GM23248 (cell line): ENCODE measurements at regions of chr16 and their contacts with region 1.

Region 1: GRCh38 chr16:28943281-28943680 is 7.5 kb upstream of the NFATC2IP start:
- DNase-seq: no peak
- H3K4me3 ChIP-seq: no peak overlapping the region
- H3K27ac ChIP-seq: no peak overlapping the region
- H3K4me1 ChIP-seq: no peaks in the 10 kb centered on the region
- H3K27me3 ChIP-seq: no peaks in the 10 kb centered on the region

Region 2: DNA sequence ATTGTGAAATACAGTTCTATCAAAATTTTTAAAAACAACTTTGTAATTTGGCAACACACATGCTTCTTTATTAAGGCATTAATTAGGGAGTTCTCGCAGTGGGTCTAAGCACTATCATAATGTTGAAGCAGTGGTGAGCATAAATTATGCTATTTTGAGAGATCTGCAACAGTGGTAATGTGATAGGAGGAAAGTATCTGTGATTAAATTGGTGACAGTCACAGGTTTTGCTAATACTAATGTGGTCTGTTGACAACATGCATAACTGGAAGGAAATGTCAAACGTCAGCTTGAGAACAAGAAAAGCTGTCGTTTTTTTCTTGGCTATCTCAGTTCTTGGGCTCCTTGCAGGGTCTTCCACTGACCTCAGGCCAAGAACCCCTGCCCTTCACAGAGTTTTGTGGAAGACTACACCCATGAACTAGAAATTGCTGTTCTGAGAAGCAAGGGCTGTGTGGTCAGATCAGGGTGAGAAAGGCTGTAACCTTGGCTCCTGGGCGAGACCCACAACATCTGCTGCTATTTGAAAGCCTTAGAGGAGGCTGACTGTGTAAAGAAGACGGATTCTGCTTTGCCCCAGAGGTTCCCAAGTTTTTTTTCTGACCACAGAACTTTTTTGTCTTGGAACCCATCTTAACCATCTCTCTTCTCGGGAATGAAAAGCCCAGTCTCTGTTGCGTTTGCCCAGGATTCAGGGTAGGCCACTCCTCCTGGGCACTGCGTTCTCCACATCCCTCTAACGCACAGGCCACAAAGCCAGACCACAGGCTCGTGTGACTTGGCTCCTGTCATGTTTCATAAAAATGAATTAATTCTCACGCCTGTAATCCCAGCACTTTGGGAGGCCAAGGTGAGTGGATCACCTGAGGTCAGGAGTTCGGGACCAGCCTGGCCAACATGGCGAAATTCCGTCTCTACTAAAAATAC is 51.1 kb before region 1 on chr16:
- in situ Hi-C with region 1: loop called (anchors 5 kb)
- DNase-seq: no peak
- H3K4me3 ChIP-seq: no peak overlapping the region
- H3K27ac ChIP-seq: no peak overlapping the region
- H3K4me1 ChIP-seq: no peaks in the 10 kb centered on the region
- H3K27me3 ChIP-seq: no peaks in the 10 kb centered on the region